ENCODE measurements at regions of chr19 and their contacts with region 1.

Region 1: GRCh38 chr19:3471954-3472655 is 8.2 kb downstream of the SMIM24 start:
- DNase-seq: no peak
- ATAC-seq: peak; percentile 31 to 58; a peak in 4 of 6 replicates
- H3K4me3 ChIP-seq: no peak overlapping the region
- H3K27ac ChIP-seq: peak overlapping the region; percentile 52 to 63; a peak in 3 of 6 replicates
- H3K4me1 ChIP-seq: peaks cover 16% of the 10 kb centered on the region; the same call in 2 of the 3 replicates
- CTCF ChIP-seq: peak; percentile 68
- EP300 ChIP-seq: no peak
- POLR2A ChIP-seq: no peak
- RAD21 ChIP-seq: peak; percentile 76 to 81

Region 2: DNA sequence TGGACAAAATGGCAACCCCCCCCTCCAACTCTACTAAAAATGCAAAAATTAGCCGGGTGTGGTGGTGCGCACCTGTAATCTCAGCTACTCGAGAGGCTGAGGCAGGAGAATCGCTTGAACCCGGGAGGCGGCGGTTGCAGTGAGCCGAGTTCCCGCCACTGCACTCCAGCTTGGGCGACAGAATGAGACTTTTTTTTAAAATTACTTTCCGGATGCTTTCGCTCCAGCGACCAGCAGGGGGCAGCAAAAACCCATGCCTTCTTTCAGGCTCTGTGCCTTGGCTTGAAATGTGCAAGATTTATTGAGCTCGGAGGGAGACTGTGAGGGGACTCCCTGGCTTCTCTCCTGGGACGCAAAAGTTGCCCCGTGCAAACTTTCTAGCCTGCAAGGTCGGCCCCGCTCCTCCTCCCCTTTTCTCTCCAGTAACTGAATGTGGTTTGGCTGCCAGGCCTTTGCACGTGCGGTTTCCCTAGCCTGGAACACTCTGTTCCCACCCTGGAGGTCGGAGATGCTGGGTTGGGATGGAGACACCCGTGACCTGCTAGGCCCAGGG is 167.2 kb before region 1 on chr19:
- CTCF ChIA-PET with region 1: interaction called, 14 read pairs
- POLR2A ChIA-PET with region 1: no interaction called
- DNase-seq: peak; percentile 62 to 72
- ATAC-seq: peak; percentile 54 to 75; a peak in 4 of 6 replicates
- H3K4me3 ChIP-seq: no peak overlapping the region
- H3K27ac ChIP-seq: peak overlapping the region; percentile 42 to 59; a peak in 3 of 6 replicates
- H3K4me1 ChIP-seq: 0 out of 3 replicates have a peak, but pooled peaks cover 3% of the 10 kb centered on the region
- CTCF ChIP-seq: peak; percentile 72
- EP300 ChIP-seq: no peak
- POLR2A ChIP-seq: no peak
- RAD21 ChIP-seq: peak; percentile 79 to 81

Region 3: GRCh38 chr19:3324321-3324856 is 147.7 kb before region 1 on chr19:
- CTCF ChIA-PET with region 1: interaction called, 51 read pairs
- POLR2A ChIA-PET with region 1: no interaction called
- DNase-seq: peak in 1 of 2 experiments; percentile 57
- ATAC-seq: peak; percentile 68 to 82; a peak in 4 of 6 replicates
- H3K4me3 ChIP-seq: no peak overlapping the region
- H3K27ac ChIP-seq: no peak overlapping the region
- H3K4me1 ChIP-seq: no peaks in the 10 kb centered on the region
- CTCF ChIP-seq: peak; percentile 50
- EP300 ChIP-seq: no peak
- POLR2A ChIP-seq: no peak
- RAD21 ChIP-seq: peak in 1 of 2 experiments; percentile 38; a peak in 2 of 5 replicates

Region 4: DNA sequence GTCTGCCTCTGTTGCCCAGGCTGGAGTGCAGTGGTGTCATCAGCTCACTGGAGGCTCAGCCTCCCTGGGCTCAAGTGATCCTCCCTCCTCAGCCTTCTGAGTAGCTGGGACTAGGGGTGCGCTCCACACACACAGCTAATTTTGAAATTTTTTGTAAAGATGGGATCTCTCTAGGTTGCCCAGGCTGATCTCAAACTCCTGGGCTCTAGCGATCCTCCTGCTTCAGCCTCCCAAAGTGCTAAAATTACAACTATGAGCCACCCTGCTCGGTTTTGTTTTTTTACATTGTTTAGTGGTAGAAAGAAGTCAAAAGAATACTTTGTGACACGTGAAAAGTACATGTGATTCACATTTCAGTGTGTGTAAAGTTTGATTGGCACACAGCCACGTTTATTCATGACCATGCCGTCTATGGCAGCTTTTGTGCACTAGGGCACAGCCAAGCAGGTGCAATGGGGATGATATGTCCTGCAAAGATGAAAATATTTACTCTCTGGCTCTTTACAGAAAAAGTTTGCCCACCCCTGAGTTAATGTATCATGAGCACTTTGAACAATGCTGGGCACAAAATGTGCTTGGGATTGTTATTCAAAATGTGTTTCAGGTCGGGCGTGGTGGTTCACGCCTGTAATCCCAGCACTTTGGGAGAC is 122.0 kb before region 1 on chr19:
- CTCF ChIA-PET with region 1: interaction called, 10 read pairs
- POLR2A ChIA-PET with region 1: no interaction called
- DNase-seq: no peak
- ATAC-seq: no peak
- H3K4me3 ChIP-seq: no peak overlapping the region
- H3K27ac ChIP-seq: peak overlapping the region; percentile 21 to 44; a peak in 2 of 6 replicates
- H3K4me1 ChIP-seq: peaks cover 17% of the 10 kb centered on the region
- CTCF ChIP-seq: no peak
- EP300 ChIP-seq: no peak
- POLR2A ChIP-seq: no peak
- RAD21 ChIP-seq: no peak

Region 5: DNA sequence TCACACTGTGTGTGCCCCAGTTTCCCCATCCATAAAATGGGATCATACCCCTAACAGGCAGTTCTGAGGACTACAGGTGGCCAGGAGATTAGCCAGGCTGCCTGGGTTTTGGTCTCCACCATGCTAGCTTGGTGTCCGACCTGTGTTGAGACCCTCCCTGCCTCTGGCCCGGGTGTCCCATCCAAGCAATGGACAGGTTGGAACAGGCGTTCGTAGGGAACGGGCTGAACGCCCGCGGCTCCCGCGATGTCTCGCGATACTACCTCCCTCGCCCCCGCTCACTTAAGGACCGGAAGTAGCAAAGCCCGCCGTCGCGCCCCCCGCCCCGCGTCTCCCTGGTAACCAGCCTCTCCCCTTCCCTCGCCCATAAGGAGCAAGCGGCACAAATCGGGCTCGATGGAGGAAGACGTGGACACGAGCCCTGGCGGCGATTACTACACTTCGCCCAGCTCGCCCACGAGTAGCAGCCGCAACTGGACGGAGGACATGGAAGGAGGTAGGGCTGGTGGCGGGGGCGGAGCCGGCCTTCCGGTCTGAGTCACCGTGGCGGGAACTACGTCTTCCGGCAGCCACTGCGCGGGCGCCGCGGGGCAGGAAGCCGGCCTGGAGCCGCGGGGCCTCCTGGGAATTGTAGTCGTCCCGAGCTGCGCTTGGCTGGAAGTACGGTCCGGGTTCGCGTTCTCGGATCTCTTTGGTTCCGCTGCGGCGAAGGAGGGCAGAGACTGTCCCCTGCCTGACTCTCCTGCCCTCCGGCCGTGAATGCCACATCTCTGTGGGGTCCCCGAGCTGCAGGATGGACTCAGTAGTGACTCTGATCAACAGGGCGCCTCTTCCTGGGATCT is 37.2 kb before region 1 on chr19:
- CTCF ChIA-PET with region 1: interaction called, 60 read pairs
- POLR2A ChIA-PET with region 1: no interaction called
- DNase-seq: peak; percentile 89 to 95
- ATAC-seq: peak; percentile 97 to 99
- H3K4me3 ChIP-seq: peak overlapping the region; percentile 30; the same call in 2 of the 3 replicates
- H3K27ac ChIP-seq: peak overlapping the region; percentile 73 to 95
- H3K4me1 ChIP-seq: peaks cover 13% of the 10 kb centered on the region
- CTCF ChIP-seq: no peak
- EP300 ChIP-seq: no peak
- POLR2A ChIP-seq: no peak
- RAD21 ChIP-seq: no peak

Region 6: GRCh38 chr19:3459089-3459881 is 12.8 kb before region 1 on chr19:
- CTCF ChIA-PET with region 1: interaction called, 18 read pairs
- POLR2A ChIA-PET with region 1: no interaction called
- DNase-seq: peak; percentile 78 to 93
- ATAC-seq: peak; percentile 49 to 66
- H3K4me3 ChIP-seq: no peak overlapping the region
- H3K27ac ChIP-seq: peak overlapping the region; percentile 91 to 95
- H3K4me1 ChIP-seq: peaks cover 55% of the 10 kb centered on the region
- CTCF ChIP-seq: no peak
- EP300 ChIP-seq: no peak
- POLR2A ChIP-seq: no peak
- RAD21 ChIP-seq: no peak

Region 7: DNA sequence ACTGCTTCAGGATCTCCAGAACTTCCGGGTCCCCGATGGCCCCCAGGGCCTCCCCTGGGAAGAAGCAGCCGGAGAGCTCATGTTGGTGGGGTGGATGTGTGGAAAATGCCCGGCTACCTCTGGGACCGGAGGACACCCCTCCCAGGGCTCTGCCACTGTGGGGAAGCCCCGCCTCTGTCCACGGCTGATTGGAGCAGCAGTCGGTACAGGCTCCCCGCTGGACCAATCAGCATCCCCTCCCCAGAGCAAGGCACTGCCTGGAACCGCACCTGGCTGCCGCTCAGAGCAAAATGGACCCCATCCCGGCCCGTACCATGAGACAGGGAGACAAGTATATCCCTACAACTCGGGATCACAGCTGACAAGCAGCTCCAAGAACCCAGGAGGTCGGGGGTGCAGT is 21.9 kb after region 1 on chr19:
- CTCF ChIA-PET with region 1: interaction called, 27 read pairs
- POLR2A ChIA-PET with region 1: no interaction called
- DNase-seq: peak in 1 of 2 experiments; percentile 80
- ATAC-seq: peak; percentile 83 to 93
- H3K4me3 ChIP-seq: no peak overlapping the region
- H3K27ac ChIP-seq: no peak overlapping the region
- H3K4me1 ChIP-seq: peaks cover 1% of the 10 kb centered on the region; the same call in 1 of the 3 replicates
- CTCF ChIP-seq: no peak
- EP300 ChIP-seq: no peak
- POLR2A ChIP-seq: no peak
- RAD21 ChIP-seq: no peak

Region 8: DNA sequence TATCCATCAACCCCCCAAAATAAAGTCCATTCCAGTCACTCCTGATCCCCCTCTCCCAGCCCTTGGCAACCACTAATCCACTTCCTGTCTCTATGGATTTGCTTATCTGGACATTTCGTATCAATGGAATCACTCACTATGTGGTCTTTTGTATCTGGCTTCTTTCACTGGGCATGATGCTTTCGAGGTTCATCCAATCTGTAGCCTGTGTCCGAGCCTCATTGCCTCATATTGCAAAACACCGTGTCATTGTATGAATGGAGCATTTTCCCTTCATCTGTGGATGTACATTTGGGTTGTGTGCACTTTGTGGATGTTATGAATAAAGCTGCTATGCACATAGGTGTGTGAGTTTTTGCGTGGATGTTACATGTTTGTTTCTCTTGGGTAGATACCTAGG is 32.6 kb after region 1 on chr19:
- CTCF ChIA-PET with region 1: no interaction called
- POLR2A ChIA-PET with region 1: no interaction called
- DNase-seq: no peak
- ATAC-seq: no peak
- H3K4me3 ChIP-seq: no peak overlapping the region
- H3K27ac ChIP-seq: peak overlapping the region; percentile 93 to 99
- H3K4me1 ChIP-seq: peaks cover 27% of the 10 kb centered on the region
- CTCF ChIP-seq: no peak
- EP300 ChIP-seq: no peak
- POLR2A ChIP-seq: no peak
- RAD21 ChIP-seq: no peak

Region 9: GRCh38 chr19:3516675-3517207 is 44.6 kb after region 1 on chr19:
- CTCF ChIA-PET with region 1: no interaction called
- POLR2A ChIA-PET with region 1: no interaction called
- DNase-seq: no peak
- ATAC-seq: no peak; a peak in 1 of 6 replicates
- H3K4me3 ChIP-seq: no peak overlapping the region
- H3K27ac ChIP-seq: no peak overlapping the region; a peak in 1 of 6 replicates
- H3K4me1 ChIP-seq: peaks cover 13% of the 10 kb centered on the region; the same call in 2 of the 3 replicates
- CTCF ChIP-seq: no peak
- EP300 ChIP-seq: no peak
- POLR2A ChIP-seq: no peak
- RAD21 ChIP-seq: no peak

Measured in A549 (cell line).